Activated T-helper 2 cell treated with anti-CD3 and anti-CD28 coated beads, Interferon-gamma antibody, Interleukin-2, Interleukin-4, amounts not matched to agents 10 μg/mL and 5 μg/mL and 100 μg/mL, durations not matched to agents 14 hours and 24 hours and 36 hours (primary cell): ENCODE measurements at regions of chr10 and their contacts with region 1.

Region 1: DNA sequence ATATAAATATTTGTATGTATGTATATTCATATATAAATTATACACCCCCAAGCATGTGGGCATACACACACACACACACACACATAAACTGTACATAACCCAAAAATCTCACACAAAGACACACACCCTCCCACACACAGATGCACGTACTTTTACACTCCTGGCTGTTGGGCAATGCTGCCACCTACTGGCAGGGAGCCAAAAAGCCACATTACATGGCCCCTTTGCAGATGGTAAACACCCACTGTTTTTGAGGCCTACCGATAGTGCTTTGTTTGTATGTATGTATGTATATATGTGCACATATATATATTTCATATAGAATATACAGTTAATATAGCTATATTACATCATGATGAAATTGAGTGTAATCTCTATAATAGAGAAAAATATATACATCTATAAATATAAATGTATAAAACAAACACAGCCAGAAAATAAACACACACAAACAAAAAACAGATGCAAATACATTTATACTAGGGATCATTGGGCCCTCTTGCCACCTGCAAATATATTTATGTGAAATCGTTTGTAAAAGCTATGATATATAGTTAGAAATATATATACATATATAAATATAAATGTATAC is 120.1 kb upstream of the ACBD5 start:
- DNase-seq: peak; percentile 70
- H3K4me3 Mint-ChIP-seq: no peak overlapping the region
- H3K27ac Mint-ChIP-seq: no peak overlapping the region
- H3K4me1 Mint-ChIP-seq: peaks cover 3% of the 10 kb centered on the region
- H3K27me3 Mint-ChIP-seq: peaks cover 2% of the 10 kb centered on the region

Region 2: GRCh38 chr10:26890956-26891355 is 469.7 kb before region 1 on chr10:
- intact Hi-C with region 1: loop called (anchors 1 kb)
- DNase-seq: peak; percentile 39
- H3K4me3 Mint-ChIP-seq: no peak overlapping the region
- H3K27ac Mint-ChIP-seq: no peak overlapping the region
- H3K4me1 Mint-ChIP-seq: no peaks in the 10 kb centered on the region
- H3K27me3 Mint-ChIP-seq: peaks cover 2% of the 10 kb centered on the region

Region 3: GRCh38 chr10:27223964-27224363 is 136.7 kb before region 1 on chr10:
- intact Hi-C with region 1: loop called (anchors 1 kb)
- DNase-seq: no peak
- H3K4me3 Mint-ChIP-seq: no peak overlapping the region
- H3K27ac Mint-ChIP-seq: no peak overlapping the region
- H3K4me1 Mint-ChIP-seq: peaks cover 8% of the 10 kb centered on the region
- H3K27me3 Mint-ChIP-seq: no peaks in the 10 kb centered on the region